A549 (cell line): ENCODE measurements at regions of chr1 and their contacts with region 1.

Region 1: GRCh38 chr1:147236959-147237826 is 5.3 kb upstream of the CHD1L start:
- DNase-seq: no peak
- ATAC-seq: peak; percentile 54 to 64; a peak in 5 of 6 replicates
- H3K4me3 ChIP-seq: no peak overlapping the region
- H3K27ac ChIP-seq: peak overlapping the region; percentile 58 to 67
- H3K4me1 ChIP-seq: peaks cover 41% of the 10 kb centered on the region
- CTCF ChIP-seq: no peak
- EP300 ChIP-seq: no peak
- POLR2A ChIP-seq: no peak
- RAD21 ChIP-seq: no peak

Region 2: DNA sequence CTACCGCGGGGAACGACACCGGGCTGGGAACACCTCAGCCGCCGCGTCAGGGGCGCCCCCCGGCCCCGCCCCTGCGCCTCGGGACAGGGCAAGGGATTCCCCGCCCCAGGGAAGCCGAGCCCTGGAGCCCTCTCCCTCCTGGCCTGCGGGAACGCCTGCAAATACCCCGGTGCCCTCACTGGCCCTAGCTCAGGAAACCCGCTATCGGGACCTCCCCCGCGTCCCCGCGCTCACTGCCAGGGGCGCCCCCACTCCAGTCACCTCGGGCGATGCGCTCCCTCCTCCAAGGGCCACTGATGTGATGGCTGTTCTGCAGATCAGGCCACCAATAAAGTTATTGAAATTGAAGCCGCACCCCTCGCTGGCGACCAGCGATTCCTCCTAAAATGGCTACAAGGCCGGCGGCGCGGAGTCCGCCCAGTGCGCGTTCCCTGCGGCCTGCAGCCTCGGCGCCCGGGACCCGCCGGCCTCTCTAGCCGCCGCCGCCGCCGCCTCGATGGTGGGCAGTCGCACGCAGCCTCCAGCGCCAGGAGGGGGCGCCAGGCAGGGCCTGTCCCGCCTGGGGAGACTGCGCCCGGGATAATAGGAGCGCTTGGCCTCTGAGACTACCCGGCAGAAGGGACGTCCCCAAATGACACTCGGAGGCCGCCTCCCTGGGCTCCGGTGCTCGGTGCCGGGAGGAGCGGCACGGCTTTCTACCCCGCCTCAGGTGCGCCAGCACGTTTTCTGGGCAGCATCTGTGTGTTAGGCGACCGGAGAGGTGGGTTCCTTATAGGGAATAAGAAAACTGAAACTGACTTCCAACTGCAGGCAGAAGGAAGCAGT is 64.8 kb before region 1 on chr1 and contains the start of gene PRKAB2:
- CTCF ChIA-PET with region 1: interaction called, 51 read pairs
- POLR2A ChIA-PET with region 1: interaction called, 13 read pairs
- DNase-seq: peak; percentile 80 to 97
- ATAC-seq: peak; percentile 94 to 96
- H3K4me3 ChIP-seq: peak within 1 kb of the TSS; percentile 87
- H3K27ac ChIP-seq: peak within 1 kb of the TSS; percentile 88 to 93
- H3K4me1 ChIP-seq: peaks cover 36% of the 10 kb centered on the region
- CTCF ChIP-seq: peak; percentile 92
- EP300 ChIP-seq: no peak
- POLR2A ChIP-seq: peak; percentile 61
- RAD21 ChIP-seq: peak; percentile 60 to 90; a peak in 4 of 5 replicates
- polyA plus RNA-seq, gene PRKAB2: 20.3 and 22.4 TPM in 2 replicates

Region 3: DNA sequence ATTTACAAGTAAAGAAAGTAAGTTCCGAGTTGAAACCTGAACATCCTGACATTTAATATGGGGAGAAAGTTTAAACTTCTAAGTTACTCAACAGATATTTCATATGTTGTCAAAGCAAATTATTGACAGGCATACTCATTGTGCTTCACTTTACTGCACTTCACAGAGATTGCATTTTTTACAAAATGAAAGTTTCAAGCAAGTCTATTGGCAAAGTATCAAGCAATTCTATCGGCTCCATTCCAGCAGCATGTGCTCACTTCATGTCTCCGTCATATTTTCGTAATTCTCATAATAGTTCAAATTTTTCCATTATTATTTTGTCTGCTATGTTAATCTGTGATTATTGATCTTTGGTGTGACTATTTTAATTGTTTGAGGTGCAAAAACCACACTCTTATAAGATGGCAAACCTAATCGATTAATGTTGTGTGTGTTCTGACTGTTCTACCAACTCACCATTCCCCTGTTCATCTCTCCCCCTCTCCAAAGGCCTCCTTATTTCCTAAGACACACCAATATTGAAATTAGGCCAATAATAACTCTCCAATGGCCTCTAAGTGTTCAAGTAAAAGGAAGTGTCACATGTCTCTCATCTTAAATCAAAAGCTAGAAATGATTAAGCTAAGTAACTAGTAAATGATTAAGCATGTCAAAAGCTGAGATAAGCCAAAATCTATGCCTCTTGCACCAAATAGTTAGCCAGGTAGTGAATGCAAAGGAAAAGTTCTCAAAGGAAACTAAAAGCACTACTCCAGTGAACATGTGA is 236.0 kb after region 1 on chr1:
- CTCF ChIA-PET with region 1: no interaction called
- POLR2A ChIA-PET with region 1: no interaction called
- DNase-seq: no peak
- ATAC-seq: no peak
- H3K4me3 ChIP-seq: no peak overlapping the region
- H3K27ac ChIP-seq: no peak overlapping the region
- H3K4me1 ChIP-seq: no peaks in the 10 kb centered on the region
- CTCF ChIP-seq: no peak
- EP300 ChIP-seq: no peak
- POLR2A ChIP-seq: no peak
- RAD21 ChIP-seq: no peak